ENCODE measurements at regions of chr1 and their contacts with region 1.

Region 1: GRCh38 chr1:10459181-10459580 is 9.3 kb downstream of the CORT start:
- DNase-seq: peak; percentile 75
- H3K27ac ChIP-seq: peak overlapping the region; percentile 84
- CTCF ChIP-seq: no peak

Region 2: GRCh38 chr1:10398734-10399623 is 60.2 kb before region 1 on chr1 and contains the start of gene PGD:
- CTCF ChIA-PET with region 1: interaction called, 11 read pairs
- POLR2A ChIA-PET with region 1: no interaction called
- DNase-seq: peak; percentile 99
- H3K27ac ChIP-seq: peak within 1 kb of the TSS; percentile 95
- CTCF ChIP-seq: no peak

Region 3: DNA sequence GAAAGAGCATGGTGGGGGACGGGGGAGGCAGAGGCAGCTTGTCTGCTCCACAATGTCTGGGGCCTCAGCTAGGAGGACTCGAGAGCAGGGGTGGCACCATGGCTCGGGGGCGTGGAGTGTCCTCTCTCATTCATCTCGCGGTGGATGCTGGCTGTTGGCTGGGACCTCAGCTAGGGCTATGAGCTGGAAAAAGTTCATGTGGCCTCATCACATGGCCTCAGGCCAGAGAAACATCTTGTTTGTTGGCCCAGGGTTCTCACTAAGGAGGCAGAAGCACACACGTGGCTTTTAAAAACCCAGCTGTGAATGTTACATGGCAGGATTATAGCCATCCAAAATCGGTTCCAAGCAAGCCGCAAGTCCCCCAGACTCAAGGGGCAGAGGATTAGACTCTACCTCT is 35.1 kb before region 1 on chr1:
- CTCF ChIA-PET with region 1: no interaction called
- POLR2A ChIA-PET with region 1: no interaction called
- DNase-seq: no peak
- H3K27ac ChIP-seq: no peak overlapping the region
- CTCF ChIP-seq: no peak

Region 4: GRCh38 chr1:12049616-12050015 is 1590.4 kb after region 1 on chr1:
- CTCF ChIA-PET with region 1: no interaction called
- POLR2A ChIA-PET with region 1: interaction called, 10 read pairs
- DNase-seq: no peak
- H3K27ac ChIP-seq: no peak overlapping the region
- CTCF ChIP-seq: no peak